ENCODE measurements at regions of chr2 and their contacts with region 1.

Region 1: DNA sequence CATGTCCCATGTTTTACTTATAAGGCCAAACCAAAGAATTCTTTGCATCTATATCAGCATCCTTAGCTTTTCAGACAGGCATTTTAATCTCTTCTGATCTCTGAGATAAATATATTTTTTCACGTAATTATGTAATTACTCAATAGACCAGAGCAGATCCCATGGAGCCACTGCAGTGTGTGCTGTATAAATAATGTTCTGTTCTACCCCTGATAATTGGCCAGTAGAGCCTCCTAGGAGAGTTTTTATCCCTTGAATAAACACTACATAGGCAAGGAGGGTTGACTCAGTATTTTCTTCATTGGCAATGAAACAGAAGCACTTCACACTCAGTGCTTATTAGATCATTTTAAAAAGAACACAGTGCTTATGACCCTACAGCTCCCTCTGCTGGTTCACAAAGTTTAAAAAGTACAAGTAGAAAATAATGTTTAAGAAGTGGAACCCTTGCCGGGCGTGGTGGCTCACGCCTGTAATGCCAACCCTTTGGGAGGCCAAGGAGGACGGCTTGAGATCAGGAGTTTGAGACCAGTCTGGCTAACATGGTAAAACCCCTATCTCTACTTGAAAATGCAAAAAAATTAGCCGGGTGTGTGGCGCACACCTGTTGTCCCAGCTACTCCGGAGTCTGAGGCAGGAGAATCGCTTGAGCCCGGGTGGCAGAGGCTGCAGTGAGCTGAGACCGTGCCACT is 91.9 kb downstream of the PPP1R1C start:
- DNase-seq: no peak
- ATAC-seq: peak; percentile 25
- H3K4me3 Mint-ChIP-seq: no peak overlapping the region
- H3K27ac Mint-ChIP-seq: no peak overlapping the region
- H3K4me1 Mint-ChIP-seq: no peaks in the 10 kb centered on the region
- H3K27me3 Mint-ChIP-seq: peaks cover 3% of the 10 kb centered on the region
- CTCF ChIP-seq: no peak

Region 2: GRCh38 chr2:181077128-181077709 is 1000.4 kb before region 1 on chr2:
- CTCF ChIA-PET with region 1: no interaction called
- POLR2A ChIA-PET with region 1: no interaction called
- intact Hi-C with region 1: loop called (anchors 1 kb)
- DNase-seq: no peak
- ATAC-seq: peak; percentile 58
- H3K4me3 Mint-ChIP-seq: no peak overlapping the region
- H3K27ac Mint-ChIP-seq: no peak overlapping the region
- H3K4me1 Mint-ChIP-seq: no peaks in the 10 kb centered on the region
- H3K27me3 Mint-ChIP-seq: no peaks in the 10 kb centered on the region
- CTCF ChIP-seq: no peak

Region 3: GRCh38 chr2:181573140-181573736 is 504.4 kb before region 1 on chr2:
- CTCF ChIA-PET with region 1: no interaction called
- POLR2A ChIA-PET with region 1: no interaction called
- intact Hi-C with region 1: loop called (anchors 5 kb)
- DNase-seq: no peak
- ATAC-seq: no peak
- H3K4me3 Mint-ChIP-seq: no peak overlapping the region
- H3K27ac Mint-ChIP-seq: no peak overlapping the region
- H3K4me1 Mint-ChIP-seq: no peaks in the 10 kb centered on the region
- H3K27me3 Mint-ChIP-seq: peaks cover 7% of the 10 kb centered on the region
- CTCF ChIP-seq: no peak

Region 4: DNA sequence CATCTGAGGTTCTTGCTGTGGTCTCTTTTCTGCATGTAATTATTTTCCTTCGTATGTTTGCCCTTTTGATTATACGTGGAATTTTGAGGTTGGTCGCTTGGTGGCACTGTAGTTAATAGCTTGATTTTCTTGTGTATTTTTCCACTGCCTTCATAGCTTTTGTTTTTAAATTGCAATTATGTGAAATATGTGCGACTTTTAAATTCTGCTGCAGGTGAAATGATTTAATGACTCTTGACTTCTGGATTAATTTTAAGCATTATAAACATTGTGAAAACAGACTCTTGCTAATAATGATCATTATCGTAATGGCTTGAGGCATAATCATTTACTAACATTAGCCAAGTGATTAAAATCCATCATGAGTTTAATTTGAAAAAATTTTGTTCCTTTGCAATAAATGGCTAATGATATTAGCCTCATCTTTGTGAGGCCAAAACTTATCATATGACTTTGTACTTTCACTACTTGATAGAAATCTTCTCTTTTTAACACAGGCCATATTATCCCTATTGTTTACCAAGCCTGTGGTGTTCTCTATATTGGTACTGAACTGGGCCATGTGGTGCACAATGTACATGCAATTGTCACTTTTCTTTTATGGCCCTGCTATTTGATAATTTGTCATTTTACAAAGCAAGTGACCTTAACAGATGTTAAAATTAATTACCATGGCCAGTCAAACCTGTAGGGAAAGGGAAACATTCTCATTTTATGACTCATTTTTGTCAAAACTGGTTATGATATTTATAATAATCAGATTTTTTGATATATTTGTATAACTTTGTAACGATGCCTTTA is 334.5 kb before region 1 on chr2:
- CTCF ChIA-PET with region 1: interaction called, 29 read pairs
- POLR2A ChIA-PET with region 1: no interaction called
- intact Hi-C with region 1: loop called (anchors 1 kb)
- DNase-seq: no peak
- ATAC-seq: no peak
- H3K4me3 Mint-ChIP-seq: no peak overlapping the region
- H3K27ac Mint-ChIP-seq: no peak overlapping the region
- H3K4me1 Mint-ChIP-seq: no peaks in the 10 kb centered on the region
- H3K27me3 Mint-ChIP-seq: peaks cover 12% of the 10 kb centered on the region
- CTCF ChIP-seq: no peak

Region 5: GRCh38 chr2:181953881-181954537 is 123.6 kb before region 1 on chr2:
- CTCF ChIA-PET with region 1: no interaction called
- POLR2A ChIA-PET with region 1: no interaction called
- intact Hi-C with region 1: loop called (anchors 2 kb)
- DNase-seq: no peak
- ATAC-seq: peak; percentile 73
- H3K4me3 Mint-ChIP-seq: peak overlapping the region; percentile 44
- H3K27ac Mint-ChIP-seq: no peak overlapping the region
- H3K4me1 Mint-ChIP-seq: peaks cover 5% of the 10 kb centered on the region
- H3K27me3 Mint-ChIP-seq: peaks cover 6% of the 10 kb centered on the region
- CTCF ChIP-seq: no peak

Region 6: DNA sequence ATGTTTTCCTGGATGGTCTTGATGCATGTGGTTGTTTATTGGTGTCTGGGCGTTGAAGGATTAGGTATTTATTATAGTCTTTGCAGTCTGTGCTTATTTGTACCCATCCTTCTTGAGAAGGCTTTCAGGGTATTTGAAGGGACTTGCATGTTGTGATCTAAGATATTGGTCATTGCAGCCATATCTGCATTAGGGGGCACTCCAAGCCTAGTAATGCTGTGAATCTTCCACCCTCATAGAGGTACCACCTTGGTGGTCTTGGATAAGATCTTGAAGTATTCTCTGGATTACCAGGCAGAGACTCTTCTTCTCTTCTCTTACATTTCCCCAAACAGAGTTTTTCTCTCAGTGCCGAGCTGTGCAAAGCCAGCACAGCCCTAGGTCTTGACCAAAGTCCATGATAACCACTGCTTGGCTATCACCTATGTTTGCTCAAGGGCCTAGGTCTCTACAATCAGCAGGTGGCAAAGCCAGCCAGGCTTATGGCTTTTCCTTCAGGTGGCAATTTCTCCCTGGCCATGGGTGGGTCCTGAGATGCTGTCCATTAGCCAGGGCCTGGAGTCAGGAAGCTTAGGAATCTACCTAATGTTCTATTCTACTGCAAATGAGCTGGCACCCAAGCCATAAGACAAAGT is 107.3 kb before region 1 on chr2:
- CTCF ChIA-PET with region 1: interaction called, 7 read pairs
- POLR2A ChIA-PET with region 1: no interaction called
- intact Hi-C with region 1: loop called (anchors 1 kb)
- DNase-seq: no peak
- ATAC-seq: no peak
- H3K4me3 Mint-ChIP-seq: no peak overlapping the region
- H3K27ac Mint-ChIP-seq: no peak overlapping the region
- H3K4me1 Mint-ChIP-seq: peaks cover 4% of the 10 kb centered on the region
- H3K27me3 Mint-ChIP-seq: peaks cover 2% of the 10 kb centered on the region
- CTCF ChIP-seq: no peak

Region 7: GRCh38 chr2:182088681-182089320 is 11.2 kb after region 1 on chr2:
- CTCF ChIA-PET with region 1: interaction called, 10 read pairs
- POLR2A ChIA-PET with region 1: no interaction called
- intact Hi-C with region 1: no loop called
- DNase-seq: no peak
- ATAC-seq: no peak
- H3K4me3 Mint-ChIP-seq: no peak overlapping the region
- H3K27ac Mint-ChIP-seq: no peak overlapping the region
- H3K4me1 Mint-ChIP-seq: no peaks in the 10 kb centered on the region
- H3K27me3 Mint-ChIP-seq: peaks cover 15% of the 10 kb centered on the region
- CTCF ChIP-seq: no peak

Region 8: DNA sequence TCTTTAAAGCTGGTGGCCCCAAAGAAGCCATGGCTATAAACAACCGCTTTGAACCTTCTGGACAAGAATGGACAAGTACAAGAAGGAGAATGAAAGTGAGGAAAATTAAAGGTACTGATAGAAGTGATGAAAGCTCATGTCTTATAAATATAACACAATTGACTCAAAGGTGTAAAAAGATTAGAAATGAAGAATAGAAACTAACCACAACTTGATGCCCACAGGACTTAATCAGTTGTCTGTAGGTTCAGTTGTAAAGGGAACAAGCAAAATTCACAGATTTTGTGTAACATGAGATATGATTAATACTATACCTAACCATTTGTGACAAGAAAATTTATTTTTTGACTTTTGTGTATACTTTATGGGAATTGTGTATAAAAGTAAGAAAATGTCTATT is 1182.3 kb after region 1 on chr2:
- CTCF ChIA-PET with region 1: no interaction called
- POLR2A ChIA-PET with region 1: no interaction called
- intact Hi-C with region 1: no loop called
- DNase-seq: no peak
- ATAC-seq: no peak
- H3K4me3 Mint-ChIP-seq: no peak overlapping the region
- H3K27ac Mint-ChIP-seq: no peak overlapping the region
- H3K4me1 Mint-ChIP-seq: no peaks in the 10 kb centered on the region
- H3K27me3 Mint-ChIP-seq: no peaks in the 10 kb centered on the region
- CTCF ChIP-seq: no peak

Measured in activated B cell treated with CpG ODN at 0.5 μM for 24 hours (primary cell).